ENCODE measurements at regions of chr6 and their contacts with region 1.

Region 1: DNA sequence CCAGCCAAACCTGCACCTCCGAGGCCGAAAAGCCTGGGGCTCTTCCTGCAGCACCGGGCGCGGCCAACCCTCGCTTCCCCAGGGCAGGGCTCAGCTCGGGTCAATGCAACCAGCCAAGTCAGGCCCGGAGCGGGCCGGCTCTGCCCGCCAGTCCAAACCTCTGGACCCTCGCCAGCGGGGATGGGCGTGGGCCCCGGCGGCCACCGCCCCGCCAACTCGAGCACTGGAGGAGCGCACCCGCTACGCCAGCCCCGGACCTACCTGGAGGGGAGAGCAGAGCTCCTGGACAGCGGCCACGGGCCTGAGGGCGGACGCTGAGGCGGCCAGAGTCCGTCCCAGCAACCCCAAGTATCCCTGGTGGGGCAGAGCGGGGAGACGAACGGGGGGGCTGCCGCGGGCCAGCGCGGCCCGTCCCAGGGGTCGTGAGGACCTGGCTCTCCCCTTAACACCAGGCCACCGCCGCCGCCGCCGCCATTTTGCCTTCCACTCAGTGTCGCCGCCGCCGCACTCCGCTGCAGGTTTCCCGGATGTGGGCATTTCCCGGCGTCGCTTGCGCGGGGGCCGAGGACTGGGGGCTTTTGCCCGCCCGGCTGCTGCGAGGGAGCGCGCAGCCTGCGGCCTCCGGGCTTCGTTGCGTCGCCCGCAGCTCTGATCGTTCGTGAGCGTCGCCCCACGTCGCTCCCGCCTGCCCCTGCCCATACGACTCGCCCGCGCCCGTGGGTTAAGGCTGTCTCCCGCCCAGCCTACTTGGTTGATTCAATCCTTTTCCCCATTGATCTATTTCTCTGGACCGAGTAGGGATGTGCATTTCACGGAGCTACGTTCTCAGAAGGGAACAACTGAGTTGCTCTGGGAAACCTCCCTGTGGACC is at the start of gene LATS1:
- DNase-seq: peak; percentile 93
- H3K4me3 ChIP-seq: peak within 1 kb of the TSS; percentile 81
- H3K27ac ChIP-seq: peak within 1 kb of the TSS; percentile 98
- H3K4me1 ChIP-seq: no peaks in the 10 kb centered on the region
- H3K27me3 ChIP-seq: no peaks in the 10 kb centered on the region
- CTCF ChIP-seq: no peak
- total RNA-seq, gene LATS1: 17.2 to 26.5 TPM

Region 2: GRCh38 chr6:149565527-149566409 is 152.1 kb before region 1 on chr6 and contains the start of gene GINM1:
- intact Hi-C with region 1: loop called (anchors 5 kb)
- DNase-seq: peak; percentile 98
- H3K4me3 ChIP-seq: peak within 1 kb of the TSS; percentile 98
- H3K27ac ChIP-seq: peak within 1 kb of the TSS; percentile 91
- H3K4me1 ChIP-seq: no peaks in the 10 kb centered on the region
- H3K27me3 ChIP-seq: no peaks in the 10 kb centered on the region
- CTCF ChIP-seq: peak; percentile 48
- total RNA-seq, gene GINM1: 22.9 to 42.8 TPM

Region 3: DNA sequence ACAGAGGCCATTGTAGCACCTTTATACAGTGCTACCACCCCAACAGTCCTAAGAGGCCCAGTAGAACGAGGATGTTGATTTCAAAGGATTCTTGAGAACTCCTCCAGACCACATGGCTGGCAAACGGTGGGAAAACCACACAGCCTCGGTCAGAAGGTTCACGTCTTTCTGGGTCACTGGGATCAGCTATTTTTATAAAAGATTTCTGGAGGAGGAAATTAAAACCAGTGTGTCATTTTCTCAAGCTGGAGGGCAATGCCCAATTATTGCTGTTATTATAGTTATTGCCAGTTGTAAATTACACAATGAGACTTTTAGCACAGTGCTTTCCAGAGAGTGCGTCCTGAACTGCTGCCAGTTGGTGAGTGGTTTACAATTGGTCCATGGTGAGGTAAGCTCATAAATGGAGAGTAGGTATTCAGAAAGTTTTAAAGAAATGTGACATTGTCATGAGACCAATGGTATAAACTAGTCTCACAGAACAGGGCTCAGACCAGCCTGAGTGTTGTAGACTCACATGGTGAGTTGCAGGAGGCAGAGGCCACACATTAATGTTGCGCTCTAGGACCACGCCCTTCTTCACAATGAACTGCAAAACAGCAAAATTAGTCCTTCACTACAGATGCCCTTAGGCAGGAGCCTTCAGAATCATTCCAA is 416.6 kb after region 1 on chr6:
- intact Hi-C with region 1: no loop called
- DNase-seq: peak; percentile 80
- H3K4me3 ChIP-seq: no peak overlapping the region
- H3K27ac ChIP-seq: peak overlapping the region; percentile 79
- H3K4me1 ChIP-seq: peaks cover 4% of the 10 kb centered on the region
- H3K27me3 ChIP-seq: no peaks in the 10 kb centered on the region
- CTCF ChIP-seq: no peak

Measured in colonic mucosa (tissue), 4 donors.